Activated CD4-positive, alpha-beta T cell treated with anti-CD3 and anti-CD28 coated beads, Interleukin-2, amount 10 ng/mL, durations not matched to agents 24 days and 14 days (primary cell): ENCODE measurements at regions of chr5 and their contacts with region 1.

Region 1: DNA sequence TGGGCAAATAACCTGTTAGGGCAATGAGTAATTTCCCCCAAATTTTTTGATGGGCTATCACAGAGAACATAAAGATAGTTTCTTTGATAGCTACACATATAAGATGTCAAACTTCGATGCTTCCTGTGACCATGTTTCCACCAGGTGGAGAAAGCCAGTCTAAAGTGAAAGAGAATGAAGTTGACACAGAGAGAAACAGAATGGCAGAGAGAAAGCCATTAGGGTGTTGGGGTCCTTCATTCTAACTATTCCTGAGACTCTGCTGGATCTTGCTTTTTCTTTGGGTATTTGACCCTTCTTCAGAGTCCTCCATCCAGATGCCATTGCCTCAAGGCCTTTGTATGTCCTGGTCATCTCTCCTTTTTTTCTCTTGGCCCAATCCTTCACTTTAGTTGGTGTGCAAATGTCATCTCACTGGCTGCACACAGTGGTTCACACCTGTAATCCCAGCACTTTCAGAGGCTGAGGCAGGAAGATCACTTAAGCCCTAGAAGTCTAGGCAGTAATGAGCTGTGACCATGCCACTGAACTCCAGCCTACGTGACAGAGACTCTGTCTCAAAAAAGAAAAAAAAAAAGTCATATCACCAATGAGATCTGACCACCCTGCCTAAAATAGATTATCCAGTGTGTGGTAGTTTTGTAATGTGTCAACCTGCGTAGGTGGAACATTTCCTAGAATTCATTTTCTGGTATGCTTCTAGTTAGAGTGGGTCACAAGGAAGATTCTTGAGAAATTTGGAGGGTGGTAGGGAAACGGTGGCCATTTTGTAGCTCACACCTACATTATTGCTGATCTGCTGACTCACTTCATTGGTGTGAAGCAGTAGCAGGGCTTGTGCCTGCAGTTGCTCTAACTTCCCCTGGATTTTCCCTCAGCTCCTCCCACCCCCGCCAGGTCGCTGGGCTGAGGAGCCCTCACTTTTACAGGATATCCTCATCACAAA is 20.8 kb upstream of the KIF2A start:
- DNase-seq: peak; percentile 88
- H3K4me3 Mint-ChIP-seq: peak overlapping the region; percentile 65
- H3K27ac Mint-ChIP-seq: peak overlapping the region; percentile 98
- H3K4me1 Mint-ChIP-seq: peaks cover 69% of the 10 kb centered on the region
- H3K27me3 Mint-ChIP-seq: no peaks in the 10 kb centered on the region

Region 2: DNA sequence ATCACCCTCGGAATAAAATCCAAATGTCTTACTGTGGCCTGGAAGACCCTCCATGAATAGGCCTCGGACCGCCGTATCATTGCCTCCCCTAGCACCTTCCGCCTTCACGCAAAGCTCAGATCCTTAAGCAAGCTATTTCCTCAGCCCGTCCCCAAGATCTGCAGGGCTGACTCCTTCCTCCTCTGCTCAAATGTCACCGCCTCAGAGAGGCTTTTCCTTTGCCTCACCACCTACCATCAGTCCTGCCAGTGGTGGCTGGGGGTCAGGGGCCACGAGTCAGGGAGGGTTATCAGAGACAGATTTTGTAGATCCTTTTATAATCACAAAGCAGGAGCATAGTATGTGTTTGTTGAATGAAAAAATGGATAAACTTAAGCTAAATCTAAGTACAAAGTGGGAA is 53.6 kb before region 1 on chr5:
- intact Hi-C with region 1: loop called (anchors 5 kb)
- DNase-seq: no peak
- H3K4me3 Mint-ChIP-seq: no peak overlapping the region
- H3K27ac Mint-ChIP-seq: peak overlapping the region; percentile 52
- H3K4me1 Mint-ChIP-seq: peaks cover 44% of the 10 kb centered on the region
- H3K27me3 Mint-ChIP-seq: no peaks in the 10 kb centered on the region

Region 3: GRCh38 chr5:62268234-62268633 is 17.0 kb before region 1 on chr5:
- intact Hi-C with region 1: loop called (anchors 1 kb)
- DNase-seq: no peak
- H3K4me3 Mint-ChIP-seq: peak overlapping the region; percentile 27
- H3K27ac Mint-ChIP-seq: peak overlapping the region; percentile 81
- H3K4me1 Mint-ChIP-seq: peaks cover 47% of the 10 kb centered on the region
- H3K27me3 Mint-ChIP-seq: no peaks in the 10 kb centered on the region

Region 4: DNA sequence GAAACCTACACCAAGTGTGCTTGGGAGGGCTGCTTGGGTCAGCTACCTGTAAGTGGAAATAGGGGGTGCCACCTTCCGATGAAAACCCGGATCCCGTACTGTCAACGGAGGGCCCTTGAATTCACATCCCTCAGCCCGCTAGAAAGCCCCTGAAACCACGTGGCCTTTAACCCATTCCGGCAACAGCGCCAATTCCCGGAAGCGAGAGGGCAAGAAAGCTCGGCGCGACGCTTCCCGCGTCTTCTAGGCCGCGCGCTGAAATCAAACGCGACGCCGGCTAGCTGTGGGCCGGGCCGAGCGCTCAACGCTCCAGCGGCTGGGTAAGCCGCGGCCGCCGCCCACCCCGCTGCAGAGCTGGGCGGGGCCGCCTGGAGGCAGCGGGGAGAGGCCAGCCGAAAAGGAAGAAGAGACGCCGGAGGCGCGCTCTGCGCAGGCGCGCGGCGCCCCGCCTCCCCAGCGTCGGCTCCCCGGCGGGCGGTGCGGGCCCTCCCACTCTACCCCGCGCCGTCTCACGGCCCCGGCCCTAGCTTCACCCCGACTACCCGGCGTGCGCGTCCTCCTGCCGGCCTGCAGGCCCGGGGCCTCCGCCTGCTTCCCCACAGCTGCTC is 20.6 kb after region 1 on chr5 and contains the start of gene KIF2A:
- intact Hi-C with region 1: loop called (anchors 1 kb)
- DNase-seq: peak; percentile 98
- H3K4me3 Mint-ChIP-seq: peak within 1 kb of the TSS; percentile 100
- H3K27ac Mint-ChIP-seq: peak within 1 kb of the TSS; percentile 100
- H3K4me1 Mint-ChIP-seq: peaks cover 51% of the 10 kb centered on the region
- H3K27me3 Mint-ChIP-seq: no peaks in the 10 kb centered on the region
- total RNA-seq, gene KIF2A: 238 and 244 TPM in 2 replicates

Region 5: GRCh38 chr5:62403434-62404250 is 118.4 kb after region 1 on chr5 and contains the start of gene DIMT1:
- intact Hi-C with region 1: loop called (anchors 1 kb)
- DNase-seq: peak; percentile 98
- H3K4me3 Mint-ChIP-seq: peak within 1 kb of the TSS; percentile 90
- H3K27ac Mint-ChIP-seq: peak within 1 kb of the TSS; percentile 91
- H3K4me1 Mint-ChIP-seq: peaks cover 31% of the 10 kb centered on the region
- H3K27me3 Mint-ChIP-seq: no peaks in the 10 kb centered on the region
- total RNA-seq, gene DIMT1: 48.8 and 49.3 TPM in 2 replicates